Activated CD4-positive, alpha-beta T cell treated with anti-CD3 and anti-CD28 coated beads, Interleukin-2, amount 10 ng/mL, durations not matched to agents 24 days and 14 days (primary cell): ENCODE measurements at regions of chr4 and their contacts with region 1.

Region 1: DNA sequence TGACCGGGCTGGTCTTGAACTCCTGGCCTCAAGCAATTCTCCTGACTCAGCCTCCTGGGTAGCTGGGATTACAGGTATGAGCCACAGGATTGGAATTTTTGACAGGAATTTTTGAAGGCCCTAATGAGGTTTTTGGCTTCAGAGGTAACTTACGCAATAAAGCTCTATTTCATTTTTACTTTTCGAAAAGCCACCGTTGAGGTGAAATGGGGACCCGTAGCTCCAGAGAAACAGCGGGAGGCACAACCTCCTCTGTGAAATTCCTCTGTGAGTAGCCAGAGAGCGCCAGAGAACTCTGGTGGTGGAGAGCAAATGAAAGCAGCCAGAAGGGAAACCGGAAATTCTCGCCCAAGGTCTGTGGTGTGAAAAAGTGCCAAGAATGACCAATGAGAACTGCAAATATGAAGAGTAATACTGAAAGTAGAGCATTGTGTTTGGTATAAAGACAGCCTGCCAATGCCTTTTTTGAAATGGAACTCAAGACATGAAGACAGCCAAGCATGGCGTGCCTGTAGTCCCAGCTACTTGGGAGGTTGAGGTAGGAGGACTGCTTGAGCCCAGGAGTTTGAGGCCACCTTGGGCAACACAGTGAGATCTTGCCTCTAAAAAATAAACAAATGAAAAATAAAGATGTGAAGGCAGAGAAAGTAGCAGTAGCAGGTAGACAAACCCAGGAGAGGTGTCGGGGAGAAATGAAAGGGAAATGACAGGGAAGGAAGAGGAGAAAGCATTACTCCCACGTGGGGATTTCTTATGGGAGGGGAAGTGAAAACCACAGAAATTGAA is 33.0 kb upstream of the TMEM131L start:
- DNase-seq: peak; percentile 93
- H3K4me3 Mint-ChIP-seq: peak overlapping the region; percentile 83
- H3K27ac Mint-ChIP-seq: peak overlapping the region; percentile 91
- H3K4me1 Mint-ChIP-seq: peaks cover 45% of the 10 kb centered on the region
- H3K27me3 Mint-ChIP-seq: peaks cover 1% of the 10 kb centered on the region

Region 2: GRCh38 chr4:153344131-153345010 is 88.8 kb before region 1 on chr4 and contains the start of gene MND1:
- intact Hi-C with region 1: loop called (anchors 1 kb)
- DNase-seq: peak; percentile 98
- H3K4me3 Mint-ChIP-seq: peak within 1 kb of the TSS; percentile 93
- H3K27ac Mint-ChIP-seq: peak within 1 kb of the TSS; percentile 90
- H3K4me1 Mint-ChIP-seq: peaks cover 46% of the 10 kb centered on the region
- H3K27me3 Mint-ChIP-seq: peaks cover 10% of the 10 kb centered on the region
- total RNA-seq, gene MND1: 15.0 and 18.8 TPM in 2 replicates

Region 3: DNA sequence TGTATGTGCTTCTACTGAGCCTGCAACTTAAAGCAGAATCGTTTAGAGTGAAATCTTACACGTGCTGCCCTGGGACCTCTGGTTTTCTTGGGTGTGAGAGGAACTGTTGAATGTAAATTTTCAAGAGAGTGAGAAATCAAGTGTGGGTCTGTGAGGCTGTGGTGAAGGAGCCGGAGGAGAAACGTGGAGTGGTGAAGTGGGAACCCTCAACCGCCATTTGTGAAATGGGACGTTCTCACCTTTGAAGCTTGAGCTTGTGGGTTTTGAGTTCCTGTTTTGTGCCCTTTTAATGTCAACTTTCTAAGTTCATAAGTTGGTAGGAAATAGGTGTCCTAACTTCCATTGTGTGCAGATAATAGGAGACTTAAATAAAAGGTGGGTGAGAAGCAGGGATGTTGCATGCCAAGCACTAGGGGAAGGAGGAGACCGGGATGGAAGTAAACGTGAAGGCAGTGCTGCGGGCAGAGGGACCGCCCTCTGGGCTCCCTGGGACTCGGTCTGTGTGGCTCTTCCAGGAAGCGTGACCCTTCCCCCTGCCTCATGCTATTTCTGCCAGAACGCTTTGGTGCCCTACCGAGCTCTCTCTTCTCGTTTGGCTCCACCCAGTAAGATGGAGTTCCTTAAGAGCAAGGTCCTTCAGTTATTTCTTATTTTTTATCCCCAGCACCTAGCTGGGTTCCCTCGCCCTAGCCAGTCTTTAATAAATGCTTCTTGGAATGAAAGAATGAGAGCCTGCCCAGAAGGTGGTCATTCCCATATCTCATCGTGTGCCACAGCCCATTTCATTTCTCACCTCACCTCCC is 89.0 kb after region 1 on chr4:
- intact Hi-C with region 1: loop called (anchors 1 kb)
- DNase-seq: peak; percentile 87
- H3K4me3 Mint-ChIP-seq: peak overlapping the region; percentile 75
- H3K27ac Mint-ChIP-seq: peak overlapping the region; percentile 95
- H3K4me1 Mint-ChIP-seq: peaks cover 83% of the 10 kb centered on the region
- H3K27me3 Mint-ChIP-seq: no peaks in the 10 kb centered on the region

Region 4: GRCh38 chr4:153573881-153574802 is 141.0 kb after region 1 on chr4:
- intact Hi-C with region 1: loop called (anchors 1 kb)
- DNase-seq: peak; percentile 89
- H3K4me3 Mint-ChIP-seq: no peak overlapping the region
- H3K27ac Mint-ChIP-seq: peak overlapping the region; percentile 52
- H3K4me1 Mint-ChIP-seq: peaks cover 49% of the 10 kb centered on the region
- H3K27me3 Mint-ChIP-seq: no peaks in the 10 kb centered on the region

Region 5: GRCh38 chr4:153748380-153748779 is 315.2 kb after region 1 on chr4:
- intact Hi-C with region 1: no loop called
- DNase-seq: peak; percentile 49
- H3K4me3 Mint-ChIP-seq: no peak overlapping the region
- H3K27ac Mint-ChIP-seq: no peak overlapping the region
- H3K4me1 Mint-ChIP-seq: no peaks in the 10 kb centered on the region
- H3K27me3 Mint-ChIP-seq: peaks cover 13% of the 10 kb centered on the region